HepG2 (cell line): ENCODE measurements at regions of chr18 and their contacts with region 1.

Region 1: GRCh38 chr18:31892936-31893335 is 50.0 kb downstream of the TRAPPC8 start:
- DNase-seq: no peak
- ATAC-seq: no peak
- H3K4me3 ChIP-seq: no peak overlapping the region
- H3K27ac ChIP-seq: no peak overlapping the region
- H3K4me1 ChIP-seq: no peaks in the 10 kb centered on the region
- H3K27me3 ChIP-seq: no peaks in the 10 kb centered on the region
- CTCF ChIP-seq: no peak
- EP300 ChIP-seq: no peak
- POLR2A ChIP-seq: no peak
- RAD21 ChIP-seq: no peak

Region 2: GRCh38 chr18:31667185-31667584 is 225.8 kb before region 1 on chr18:
- CTCF ChIA-PET with region 1: no interaction called
- POLR2A ChIA-PET with region 1: no interaction called
- in situ Hi-C with region 1: no loop called
- intact Hi-C with region 1: no loop called
- DNase-seq: no peak
- ATAC-seq: no peak
- H3K4me3 ChIP-seq: no peak overlapping the region
- H3K27ac ChIP-seq: no peak overlapping the region
- H3K4me1 ChIP-seq: no peaks in the 10 kb centered on the region
- H3K27me3 ChIP-seq: no peaks in the 10 kb centered on the region
- CTCF ChIP-seq: no peak
- EP300 ChIP-seq: no peak
- POLR2A ChIP-seq: no peak
- RAD21 ChIP-seq: no peak

Region 3: GRCh38 chr18:31850844-31851243 is 42.1 kb before region 1 on chr18:
- CTCF ChIA-PET with region 1: no interaction called
- POLR2A ChIA-PET with region 1: no interaction called
- in situ Hi-C with region 1: no loop called
- intact Hi-C with region 1: loop called (anchors 5 kb)
- DNase-seq: no peak
- ATAC-seq: no peak
- H3K4me3 ChIP-seq: no peak overlapping the region
- H3K27ac ChIP-seq: no peak overlapping the region
- H3K4me1 ChIP-seq: no peaks in the 10 kb centered on the region
- H3K27me3 ChIP-seq: no peaks in the 10 kb centered on the region
- CTCF ChIP-seq: no peak
- EP300 ChIP-seq: no peak
- POLR2A ChIP-seq: no peak
- RAD21 ChIP-seq: no peak

Region 4: DNA sequence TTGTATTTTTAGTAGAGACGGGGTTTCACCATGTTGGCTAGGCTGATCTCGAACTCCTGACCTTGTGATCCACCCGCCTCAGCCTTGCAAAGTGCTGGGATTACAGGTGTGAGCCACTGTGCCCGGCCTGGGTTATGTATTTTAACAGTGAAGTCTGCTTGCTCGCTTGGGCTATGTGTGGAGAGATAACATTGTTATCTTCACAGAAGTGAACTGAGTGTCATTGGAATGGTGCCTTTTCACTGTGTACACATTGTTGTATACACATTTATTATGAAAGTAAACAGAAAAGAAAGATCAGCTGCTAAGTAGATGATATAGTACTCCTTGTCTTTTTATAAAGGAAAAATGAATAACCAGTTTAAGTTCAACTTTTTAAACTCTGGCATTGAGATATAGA is 229.1 kb after region 1 on chr18:
- CTCF ChIA-PET with region 1: no interaction called
- POLR2A ChIA-PET with region 1: no interaction called
- in situ Hi-C with region 1: no loop called
- intact Hi-C with region 1: no loop called
- DNase-seq: peak; percentile 9
- ATAC-seq: peak; percentile 60
- H3K4me3 ChIP-seq: no peak overlapping the region
- H3K27ac ChIP-seq: no peak overlapping the region
- H3K4me1 ChIP-seq: no peaks in the 10 kb centered on the region; the same call in 1 of the 2 replicates
- H3K27me3 ChIP-seq: no peaks in the 10 kb centered on the region; a peak in 1 of 5 replicates
- CTCF ChIP-seq: no peak
- EP300 ChIP-seq: no peak
- POLR2A ChIP-seq: no peak
- RAD21 ChIP-seq: no peak